Activated CD4-positive, alpha-beta memory T cell treated with anti-CD3 and anti-CD28 coated beads for 36 hours (primary cell): ENCODE measurements at regions of chr3 and their contacts with region 1.

Region 1: DNA sequence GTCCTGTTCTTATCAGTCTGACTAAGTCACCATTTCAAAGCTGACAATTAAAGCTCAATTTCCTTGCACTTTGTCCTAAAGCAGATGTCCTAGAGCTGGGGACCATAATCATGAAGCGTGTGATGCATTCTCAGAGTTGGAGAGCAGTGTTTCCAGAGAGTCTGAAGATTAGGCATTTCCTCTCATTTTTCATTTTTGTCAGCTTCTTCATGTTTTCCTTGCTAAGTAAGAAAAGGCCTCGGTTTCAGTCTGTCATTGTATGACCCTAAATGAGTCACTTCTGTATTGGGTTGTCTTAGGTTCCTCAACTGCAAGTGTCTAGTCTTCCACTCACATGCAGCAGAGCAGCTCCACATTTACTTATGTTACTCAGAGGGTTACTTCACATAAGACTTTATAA is 257.2 kb upstream of the TPRG1 start:
- DNase-seq: peak; percentile 23
- H3K4me3 Mint-ChIP-seq: no peak overlapping the region
- H3K27ac Mint-ChIP-seq: peak overlapping the region; percentile 86
- H3K4me1 Mint-ChIP-seq: peaks cover 43% of the 10 kb centered on the region
- H3K27me3 Mint-ChIP-seq: no peaks in the 10 kb centered on the region

Region 2: GRCh38 chr3:187802928-187803259 is 1111.7 kb before region 1 on chr3:
- CTCF ChIA-PET with region 1: no interaction called
- POLR2A ChIA-PET with region 1: no interaction called
- intact Hi-C with region 1: loop called (anchors 5 kb)
- DNase-seq: peak; percentile 89
- H3K4me3 Mint-ChIP-seq: peak overlapping the region; percentile 54
- H3K27ac Mint-ChIP-seq: peak overlapping the region; percentile 95
- H3K4me1 Mint-ChIP-seq: peaks cover 96% of the 10 kb centered on the region
- H3K27me3 Mint-ChIP-seq: no peaks in the 10 kb centered on the region

Region 3: GRCh38 chr3:188257384-188258026 is 657.0 kb before region 1 on chr3:
- CTCF ChIA-PET with region 1: no interaction called
- POLR2A ChIA-PET with region 1: interaction called, 3 read pairs
- intact Hi-C with region 1: loop called (anchors 1 kb)
- DNase-seq: no peak
- H3K4me3 Mint-ChIP-seq: no peak overlapping the region
- H3K27ac Mint-ChIP-seq: peak overlapping the region; percentile 47
- H3K4me1 Mint-ChIP-seq: peaks cover 49% of the 10 kb centered on the region
- H3K27me3 Mint-ChIP-seq: no peaks in the 10 kb centered on the region

Region 4: GRCh38 chr3:188389711-188390342 is 524.7 kb before region 1 on chr3:
- CTCF ChIA-PET with region 1: no interaction called
- POLR2A ChIA-PET with region 1: no interaction called
- intact Hi-C with region 1: loop called (anchors 2 kb)
- DNase-seq: peak; percentile 74
- H3K4me3 Mint-ChIP-seq: no peak overlapping the region
- H3K27ac Mint-ChIP-seq: peak overlapping the region; percentile 50
- H3K4me1 Mint-ChIP-seq: peaks cover 27% of the 10 kb centered on the region
- H3K27me3 Mint-ChIP-seq: no peaks in the 10 kb centered on the region

Region 5: DNA sequence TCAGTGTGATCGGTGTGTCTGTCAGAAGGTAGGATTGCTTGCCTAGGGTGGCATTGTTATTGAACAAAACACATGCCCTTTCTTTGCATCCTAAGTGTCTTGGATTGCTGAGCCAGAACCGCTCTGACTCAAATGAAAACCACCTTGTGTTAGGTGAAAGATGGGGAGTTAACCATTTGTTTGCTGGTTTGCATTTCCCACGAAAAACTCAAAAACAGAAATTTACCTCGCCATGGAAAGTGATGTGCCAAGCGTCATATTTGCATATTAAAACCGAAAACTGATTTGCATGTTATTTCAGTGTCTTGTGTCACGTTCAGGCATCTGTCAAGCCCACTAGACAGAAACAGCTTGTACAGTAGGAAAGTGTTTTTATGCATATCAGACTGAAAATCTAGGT is 217.4 kb before region 1 on chr3:
- CTCF ChIA-PET with region 1: interaction called, 3 read pairs
- POLR2A ChIA-PET with region 1: interaction called, 4 read pairs
- intact Hi-C with region 1: loop called (anchors 1 kb)
- DNase-seq: peak; percentile 55
- H3K4me3 Mint-ChIP-seq: no peak overlapping the region
- H3K27ac Mint-ChIP-seq: peak overlapping the region; percentile 7
- H3K4me1 Mint-ChIP-seq: peaks cover 50% of the 10 kb centered on the region
- H3K27me3 Mint-ChIP-seq: peaks cover 7% of the 10 kb centered on the region

Region 6: GRCh38 chr3:188947401-188948280 is 33.1 kb after region 1 on chr3:
- CTCF ChIA-PET with region 1: interaction called, 19 read pairs
- POLR2A ChIA-PET with region 1: interaction called, 4 read pairs
- intact Hi-C with region 1: loop called (anchors 2 kb)
- DNase-seq: peak; percentile 47
- H3K4me3 Mint-ChIP-seq: no peak overlapping the region
- H3K27ac Mint-ChIP-seq: no peak overlapping the region
- H3K4me1 Mint-ChIP-seq: peaks cover 27% of the 10 kb centered on the region
- H3K27me3 Mint-ChIP-seq: peaks cover 14% of the 10 kb centered on the region

Region 7: DNA sequence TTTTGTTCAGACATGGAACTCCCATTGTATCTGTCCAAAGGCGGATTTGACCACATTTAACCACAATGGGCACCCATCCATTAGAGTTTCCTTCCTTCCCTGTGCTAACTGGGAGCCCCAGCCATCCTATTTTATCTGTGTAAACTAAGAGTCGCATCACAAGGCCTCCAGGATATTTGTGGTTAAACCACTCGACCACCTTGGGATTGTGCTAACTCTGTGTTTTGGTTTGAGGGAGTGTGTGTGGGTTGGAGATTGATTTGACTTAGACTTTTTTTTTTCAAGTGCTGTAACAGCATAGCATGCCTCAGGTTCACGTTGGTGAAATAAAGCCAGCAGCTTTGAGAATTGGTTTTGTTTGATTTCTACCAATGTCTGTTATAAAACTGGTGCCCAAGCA is 616.3 kb after region 1 on chr3:
- CTCF ChIA-PET with region 1: no interaction called
- POLR2A ChIA-PET with region 1: interaction called, 3 read pairs
- intact Hi-C with region 1: loop called (anchors 5 kb)
- DNase-seq: peak; percentile 26
- H3K4me3 Mint-ChIP-seq: no peak overlapping the region
- H3K27ac Mint-ChIP-seq: peak overlapping the region; percentile 67
- H3K4me1 Mint-ChIP-seq: peaks cover 23% of the 10 kb centered on the region
- H3K27me3 Mint-ChIP-seq: peaks cover 1% of the 10 kb centered on the region